ENCODE measurements at regions of chr1 and their contacts with region 1.

Region 1: DNA sequence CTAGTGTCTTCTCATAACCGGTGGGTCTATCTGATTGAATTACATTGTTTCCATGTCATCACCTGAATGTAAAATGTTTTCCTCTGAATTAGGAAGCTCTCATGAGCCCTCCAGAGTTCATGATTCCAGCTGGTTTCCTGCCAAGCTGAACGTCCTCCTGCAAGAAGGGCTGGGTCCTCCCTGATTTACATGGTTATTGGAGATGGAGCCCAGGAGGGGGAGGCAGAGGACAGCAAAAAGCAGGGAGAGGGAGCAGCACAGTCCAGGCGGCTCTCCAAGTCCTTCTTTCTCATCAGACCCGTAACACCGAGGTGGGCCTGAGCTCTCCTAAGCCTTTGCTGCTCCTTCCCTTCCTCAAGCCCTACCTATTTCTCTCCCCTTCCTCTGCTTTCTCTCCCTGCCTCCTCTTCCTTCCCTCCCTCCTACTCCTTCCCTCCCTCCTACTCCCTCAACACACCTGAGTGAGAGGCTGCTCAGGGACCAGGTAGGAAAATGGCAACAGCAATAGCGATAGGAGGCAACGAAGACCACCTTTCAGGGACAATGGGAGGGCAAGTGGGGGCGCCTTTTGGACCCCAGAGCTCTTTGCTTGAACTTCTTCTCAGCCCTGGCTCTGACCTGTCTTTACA is 265.9 kb downstream of the PRDM2 start:
- DNase-seq: peak; percentile 68
- H3K4me3 Mint-ChIP-seq: no peak overlapping the region
- H3K27ac Mint-ChIP-seq: no peak overlapping the region
- H3K4me1 Mint-ChIP-seq: peaks cover 9% of the 10 kb centered on the region
- H3K27me3 Mint-ChIP-seq: no peaks in the 10 kb centered on the region
- CTCF ChIP-seq: peak; percentile 79

Region 2: GRCh38 chr1:13662493-13662892 is 303.4 kb before region 1 on chr1:
- CTCF ChIA-PET with region 1: interaction called, 18 read pairs
- POLR2A ChIA-PET with region 1: no interaction called
- intact Hi-C with region 1: no loop called
- DNase-seq: peak; percentile 29
- H3K4me3 Mint-ChIP-seq: no peak overlapping the region
- H3K27ac Mint-ChIP-seq: peak overlapping the region; percentile 5
- H3K4me1 Mint-ChIP-seq: peaks cover 36% of the 10 kb centered on the region
- H3K27me3 Mint-ChIP-seq: no peaks in the 10 kb centered on the region
- CTCF ChIP-seq: no peak

Region 3: GRCh38 chr1:13864760-13865159 is 101.1 kb before region 1 on chr1:
- CTCF ChIA-PET with region 1: no interaction called
- POLR2A ChIA-PET with region 1: no interaction called
- intact Hi-C with region 1: no loop called
- DNase-seq: no peak
- H3K4me3 Mint-ChIP-seq: no peak overlapping the region
- H3K27ac Mint-ChIP-seq: no peak overlapping the region
- H3K4me1 Mint-ChIP-seq: peaks cover 6% of the 10 kb centered on the region
- H3K27me3 Mint-ChIP-seq: no peaks in the 10 kb centered on the region
- CTCF ChIP-seq: no peak

Region 4: DNA sequence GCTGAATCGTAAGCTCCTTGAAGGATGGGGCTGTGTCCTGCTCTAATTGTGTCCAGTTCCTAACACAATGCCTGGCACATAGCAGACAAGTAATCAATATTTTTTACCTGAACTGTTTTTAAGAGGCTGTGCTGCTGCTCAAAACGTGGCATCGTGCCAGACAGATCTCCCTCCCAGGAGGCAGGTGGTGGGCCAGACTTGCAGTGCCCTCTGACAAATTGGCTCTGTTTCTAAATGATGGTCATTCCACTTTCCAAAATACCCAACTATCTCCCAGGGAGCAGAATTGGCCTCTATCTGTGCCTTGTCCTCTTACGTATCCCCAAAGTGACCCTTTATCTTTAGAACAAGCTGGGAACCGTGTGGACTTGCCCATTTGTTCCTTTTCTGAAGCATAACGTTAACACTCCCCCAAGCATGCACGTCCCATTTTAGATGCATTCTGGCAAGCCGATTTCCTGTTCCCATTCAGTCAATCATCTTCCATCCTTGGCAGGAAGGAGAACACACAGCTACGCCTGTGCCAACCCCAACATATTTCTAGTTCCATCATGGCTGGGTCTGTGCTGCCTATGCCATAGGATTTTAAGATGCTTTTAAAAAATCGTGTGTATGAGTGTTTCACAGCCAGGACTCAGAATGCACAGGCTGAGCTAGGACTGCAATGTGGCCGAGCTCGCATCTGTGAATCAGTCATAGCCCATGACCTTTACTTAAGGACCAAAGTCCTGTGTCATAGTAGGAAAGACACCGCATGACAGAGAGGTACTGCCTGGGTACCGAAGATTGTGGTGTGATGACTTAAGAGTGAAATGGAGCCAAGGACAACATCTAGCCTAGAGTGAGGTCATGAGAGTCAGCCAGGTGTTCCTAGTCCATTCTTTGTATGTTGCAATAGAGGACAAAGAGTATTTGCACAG is 142.7 kb after region 1 on chr1:
- CTCF ChIA-PET with region 1: interaction called, 12 read pairs
- POLR2A ChIA-PET with region 1: interaction called, 5 read pairs
- intact Hi-C with region 1: no loop called
- DNase-seq: peak; percentile 63
- H3K4me3 Mint-ChIP-seq: no peak overlapping the region
- H3K27ac Mint-ChIP-seq: peak overlapping the region; percentile 86
- H3K4me1 Mint-ChIP-seq: peaks cover 42% of the 10 kb centered on the region
- H3K27me3 Mint-ChIP-seq: peaks cover 16% of the 10 kb centered on the region
- CTCF ChIP-seq: no peak

Region 5: GRCh38 chr1:14415395-14415794 is 449.5 kb after region 1 on chr1:
- CTCF ChIA-PET with region 1: no interaction called
- POLR2A ChIA-PET with region 1: no interaction called
- intact Hi-C with region 1: loop called (anchors 5 kb)
- DNase-seq: peak; percentile 4
- H3K4me3 Mint-ChIP-seq: no peak overlapping the region
- H3K27ac Mint-ChIP-seq: no peak overlapping the region
- H3K4me1 Mint-ChIP-seq: peaks cover 9% of the 10 kb centered on the region
- H3K27me3 Mint-ChIP-seq: no peaks in the 10 kb centered on the region
- CTCF ChIP-seq: no peak

Region 6: GRCh38 chr1:14435368-14436023 is 469.6 kb after region 1 on chr1:
- CTCF ChIA-PET with region 1: no interaction called
- POLR2A ChIA-PET with region 1: no interaction called
- intact Hi-C with region 1: no loop called
- DNase-seq: no peak
- H3K4me3 Mint-ChIP-seq: no peak overlapping the region
- H3K27ac Mint-ChIP-seq: no peak overlapping the region
- H3K4me1 Mint-ChIP-seq: peaks cover 6% of the 10 kb centered on the region
- H3K27me3 Mint-ChIP-seq: no peaks in the 10 kb centered on the region
- CTCF ChIP-seq: peak; percentile 21

Region 7: DNA sequence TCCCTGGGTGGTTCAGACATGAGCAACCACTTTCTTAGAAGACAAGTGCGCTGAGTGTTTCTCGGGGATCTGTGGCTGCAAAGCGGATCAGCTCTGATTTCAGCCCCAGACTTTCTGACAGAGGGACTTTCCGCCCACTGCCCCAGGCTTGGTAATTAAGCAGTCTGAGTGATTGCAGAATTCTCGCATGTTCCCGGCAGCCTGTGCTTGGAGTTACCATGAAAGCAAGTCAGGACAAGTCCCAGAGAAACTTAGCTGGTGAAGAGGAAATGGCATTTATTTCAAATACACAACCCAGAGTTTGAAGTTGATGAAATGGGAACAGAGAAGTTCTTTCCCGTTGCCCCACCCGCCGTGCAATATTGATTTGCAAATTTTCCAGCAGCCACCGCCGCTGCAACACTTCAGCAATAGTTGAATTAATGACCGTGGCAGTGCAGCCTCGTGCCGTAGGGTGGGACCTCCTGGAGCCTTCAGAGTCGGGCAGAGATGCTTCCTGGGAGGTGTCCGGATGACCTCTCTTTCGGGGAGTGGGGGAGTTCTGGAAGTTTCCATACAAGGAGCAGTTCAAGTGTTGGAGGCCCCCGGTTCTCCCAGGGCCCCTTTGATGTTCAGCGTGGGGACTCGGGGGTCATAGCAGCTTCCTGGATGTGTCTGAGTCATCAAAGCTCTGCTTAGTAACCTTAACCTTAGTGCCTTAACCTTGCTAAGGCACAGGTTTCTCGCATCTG is 767.3 kb after region 1 on chr1:
- CTCF ChIA-PET with region 1: interaction called, 3 read pairs
- POLR2A ChIA-PET with region 1: no interaction called
- intact Hi-C with region 1: loop called (anchors 5 kb)
- DNase-seq: peak; percentile 93
- H3K4me3 Mint-ChIP-seq: peak overlapping the region; percentile 60
- H3K27ac Mint-ChIP-seq: peak overlapping the region; percentile 98
- H3K4me1 Mint-ChIP-seq: peaks cover 33% of the 10 kb centered on the region
- H3K27me3 Mint-ChIP-seq: no peaks in the 10 kb centered on the region
- CTCF ChIP-seq: no peak

Region 8: DNA sequence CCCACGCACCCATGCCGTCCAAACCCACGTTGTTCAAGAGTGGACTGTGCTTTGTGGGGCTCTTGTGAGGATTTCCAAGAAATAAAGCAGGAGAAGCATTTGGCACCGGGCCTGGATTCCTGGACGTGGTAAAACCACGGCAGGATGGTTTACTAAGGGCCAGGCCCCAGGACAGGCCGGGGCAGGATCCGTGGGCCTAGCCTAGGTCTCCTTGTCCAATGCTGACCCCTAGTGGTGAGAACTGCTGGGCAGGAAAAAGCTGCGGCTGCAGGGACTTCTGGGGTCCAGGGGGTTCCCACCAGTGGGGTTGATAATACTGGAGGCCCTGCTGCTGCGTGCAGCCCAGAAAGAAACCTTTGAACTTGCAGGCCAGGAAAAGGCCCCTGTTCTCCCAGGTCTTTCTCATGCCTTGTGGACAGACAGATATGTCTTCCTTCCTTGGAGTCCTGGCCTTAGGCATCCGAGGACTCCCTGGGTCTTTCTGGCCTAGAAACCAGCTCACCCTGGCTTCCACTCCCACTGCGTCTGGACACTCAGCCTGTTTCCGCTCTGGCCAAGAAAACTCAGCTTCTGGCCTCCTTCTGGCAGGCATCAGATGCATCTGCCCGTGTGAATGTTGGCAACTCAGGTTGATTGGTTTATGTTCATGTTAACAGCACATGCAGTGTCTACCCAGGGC is 1080.7 kb after region 1 on chr1:
- CTCF ChIA-PET with region 1: interaction called, 12 read pairs
- POLR2A ChIA-PET with region 1: no interaction called
- intact Hi-C with region 1: loop called (anchors 1 kb)
- DNase-seq: peak; percentile 80
- H3K4me3 Mint-ChIP-seq: no peak overlapping the region
- H3K27ac Mint-ChIP-seq: no peak overlapping the region
- H3K4me1 Mint-ChIP-seq: no peaks in the 10 kb centered on the region
- H3K27me3 Mint-ChIP-seq: no peaks in the 10 kb centered on the region
- CTCF ChIP-seq: peak; percentile 95